IMR-90 (cell line): ENCODE measurements at regions of chr1 and their contacts with region 1.

Region 1: DNA sequence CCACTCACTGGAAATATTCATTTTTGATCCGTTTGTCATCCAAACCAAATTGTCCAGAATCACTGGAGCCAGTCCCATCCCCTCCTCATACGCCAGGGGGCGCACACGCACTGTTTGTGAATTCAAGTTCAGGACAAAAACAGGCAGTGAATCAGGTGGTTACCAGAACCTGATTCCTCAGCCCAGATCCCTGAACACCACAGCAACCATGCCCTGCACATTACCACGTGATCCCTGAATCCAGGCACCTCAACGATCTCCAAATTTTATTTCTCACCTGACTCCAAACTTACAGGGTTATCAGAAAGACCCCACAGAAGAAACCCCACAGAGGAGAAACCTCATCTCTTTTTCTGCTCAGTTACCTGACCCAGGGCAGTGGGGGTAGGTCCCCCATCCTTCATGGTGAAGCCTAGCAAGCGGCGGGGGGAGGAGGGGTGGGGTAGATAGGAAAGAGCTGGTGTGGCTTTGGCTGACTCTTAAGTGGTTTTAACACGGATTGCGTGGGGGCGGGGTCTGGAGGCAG is 1.4 kb upstream of the PTPRF start:
- DNase-seq: peak; percentile 90
- ATAC-seq: peak; percentile 64
- H3K4me3 ChIP-seq: no peak overlapping the region
- H3K27ac ChIP-seq: no peak overlapping the region
- H3K4me1 ChIP-seq: peaks cover 8% of the 10 kb centered on the region
- H3K27me3 ChIP-seq: no peaks in the 10 kb centered on the region
- CTCF ChIP-seq: peak; percentile 96
- POLR2A ChIP-seq: no peak
- RAD21 ChIP-seq: peak; percentile 93

Region 2: GRCh38 chr1:43441894-43442637 is 87.2 kb before region 1 on chr1:
- CTCF ChIA-PET with region 1: no interaction called
- POLR2A ChIA-PET with region 1: no interaction called
- dilution Hi-C with region 1: no loop called
- in situ Hi-C with region 1: no loop called
- intact Hi-C with region 1: no loop called
- DNase-seq: no peak
- ATAC-seq: no peak
- H3K4me3 ChIP-seq: no peak overlapping the region
- H3K27ac ChIP-seq: no peak overlapping the region
- H3K4me1 ChIP-seq: peaks cover 4% of the 10 kb centered on the region; the same call in 1 of the 2 replicates
- H3K27me3 ChIP-seq: no peaks in the 10 kb centered on the region
- CTCF ChIP-seq: no peak
- POLR2A ChIP-seq: no peak
- RAD21 ChIP-seq: no peak

Region 3: DNA sequence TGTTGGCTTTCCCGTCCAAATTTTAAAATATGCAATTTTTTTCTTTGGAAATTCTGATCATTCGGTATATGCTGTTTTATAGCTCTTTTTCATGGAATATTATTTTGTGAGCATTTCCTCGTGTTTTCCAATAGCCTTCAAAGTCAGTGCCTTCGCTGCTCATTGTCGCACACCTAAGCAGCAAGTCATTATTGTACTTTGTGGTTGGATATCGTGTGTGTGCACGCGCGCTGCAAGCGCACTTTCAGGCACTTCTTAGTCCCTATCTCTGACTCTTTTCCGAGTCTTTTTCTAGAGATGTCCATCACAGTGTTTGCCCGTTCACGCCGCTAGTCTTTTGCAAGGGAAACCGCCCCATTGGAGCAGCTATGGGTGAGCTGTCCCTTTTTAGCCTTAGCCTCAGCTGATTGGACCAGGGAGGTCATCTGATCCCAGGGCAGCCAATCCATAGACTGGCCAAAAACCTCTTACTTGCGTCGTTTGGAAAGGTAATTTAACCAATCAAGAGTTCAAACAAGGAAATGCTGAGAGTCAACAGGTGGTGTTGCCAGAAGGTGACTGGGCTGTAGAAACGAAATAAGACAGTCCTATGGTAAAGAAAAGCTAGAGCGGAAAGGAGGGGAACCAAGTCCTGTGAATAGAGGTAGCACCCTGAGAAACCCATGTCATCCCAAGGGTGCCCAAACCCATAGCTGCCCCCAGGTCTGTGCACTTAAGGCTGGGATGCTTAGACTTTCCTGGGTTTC is 74.8 kb before region 1 on chr1:
- CTCF ChIA-PET with region 1: no interaction called
- POLR2A ChIA-PET with region 1: no interaction called
- dilution Hi-C with region 1: no loop called
- in situ Hi-C with region 1: no loop called
- intact Hi-C with region 1: loop called (anchors 5 kb)
- DNase-seq: peak; percentile 81
- ATAC-seq: peak; percentile 59
- H3K4me3 ChIP-seq: peak overlapping the region; percentile 57
- H3K27ac ChIP-seq: peak overlapping the region; percentile 87
- H3K4me1 ChIP-seq: peaks cover 7% of the 10 kb centered on the region
- H3K27me3 ChIP-seq: no peaks in the 10 kb centered on the region
- CTCF ChIP-seq: no peak
- POLR2A ChIP-seq: no peak
- RAD21 ChIP-seq: no peak

Region 4: DNA sequence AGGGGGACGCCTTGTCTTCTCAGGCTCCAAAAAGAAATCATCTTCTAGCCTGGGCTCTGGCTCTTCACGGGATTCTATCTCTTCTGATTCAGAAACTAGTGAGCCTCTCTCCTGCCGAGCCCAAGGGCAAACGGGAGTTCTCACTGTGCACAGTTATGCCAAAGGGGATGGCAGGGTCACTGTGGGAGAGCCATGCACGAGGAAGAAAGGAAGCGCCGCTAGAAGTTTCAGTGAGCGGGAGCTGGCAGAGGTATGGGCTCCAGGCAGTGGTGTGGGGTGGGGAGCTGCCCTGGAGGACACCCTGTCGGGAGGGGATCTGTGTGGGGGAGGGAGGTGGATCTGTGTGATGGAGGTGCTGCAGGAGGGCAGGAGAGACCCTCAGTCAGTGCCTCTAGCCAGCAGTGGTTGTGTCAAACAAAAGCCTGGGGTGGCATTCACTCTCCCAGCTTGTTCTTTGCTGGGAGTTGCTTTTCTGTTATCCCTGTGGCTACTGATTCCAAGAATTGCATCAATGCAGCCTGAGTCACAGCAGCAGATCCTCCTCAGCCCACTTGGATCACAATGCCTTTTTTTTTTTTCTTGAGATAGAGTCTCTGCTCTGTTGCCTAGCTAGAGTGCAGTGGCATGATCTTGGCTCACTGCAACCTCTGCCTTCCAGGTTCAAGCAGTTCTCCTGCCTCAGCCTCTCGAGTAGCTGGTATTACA is 142.5 kb after region 1 on chr1:
- CTCF ChIA-PET with region 1: interaction called, 4 read pairs
- POLR2A ChIA-PET with region 1: no interaction called
- dilution Hi-C with region 1: no loop called
- in situ Hi-C with region 1: no loop called
- intact Hi-C with region 1: loop called (anchors 1 kb)
- DNase-seq: peak; percentile 82
- ATAC-seq: peak; percentile 86
- H3K4me3 ChIP-seq: no peak overlapping the region
- H3K27ac ChIP-seq: no peak overlapping the region
- H3K4me1 ChIP-seq: peaks cover 3% of the 10 kb centered on the region
- H3K27me3 ChIP-seq: no peaks in the 10 kb centered on the region
- CTCF ChIP-seq: no peak
- POLR2A ChIP-seq: no peak
- RAD21 ChIP-seq: no peak

Region 5: DNA sequence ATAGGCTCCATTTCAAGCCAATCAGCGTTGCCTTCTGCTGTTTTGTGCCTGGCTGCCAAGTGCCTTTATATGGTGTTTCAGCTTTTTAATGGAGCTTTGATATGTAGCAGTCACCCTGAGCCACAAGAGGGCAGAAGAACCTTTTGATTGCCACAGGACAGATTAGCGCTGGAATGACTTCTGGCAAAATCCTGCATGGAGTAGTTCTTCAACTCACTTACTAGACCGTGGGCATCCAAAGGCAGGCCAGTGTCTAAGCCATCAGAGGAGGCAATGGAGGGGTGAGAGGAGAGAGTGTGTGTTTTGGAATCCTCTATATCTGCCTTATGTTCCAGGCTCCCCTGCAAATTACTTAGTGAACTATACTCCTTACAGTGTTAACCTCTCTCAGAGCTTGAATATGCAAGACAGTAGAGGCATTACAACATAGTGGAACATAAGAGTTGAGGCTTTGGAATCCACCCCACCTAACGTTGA is 234.3 kb after region 1 on chr1:
- CTCF ChIA-PET with region 1: no interaction called
- POLR2A ChIA-PET with region 1: no interaction called
- dilution Hi-C with region 1: no loop called
- in situ Hi-C with region 1: no loop called
- intact Hi-C with region 1: loop called (anchors 1 kb)
- DNase-seq: peak; percentile 93
- ATAC-seq: peak; percentile 98
- H3K4me3 ChIP-seq: no peak overlapping the region
- H3K27ac ChIP-seq: no peak overlapping the region
- H3K4me1 ChIP-seq: peaks cover 7% of the 10 kb centered on the region
- H3K27me3 ChIP-seq: no peaks in the 10 kb centered on the region
- CTCF ChIP-seq: peak; percentile 97
- POLR2A ChIP-seq: 0 out of 2 replicates have a peak, but pooled peaks have one; percentile 46
- RAD21 ChIP-seq: peak; percentile 100

Region 6: DNA sequence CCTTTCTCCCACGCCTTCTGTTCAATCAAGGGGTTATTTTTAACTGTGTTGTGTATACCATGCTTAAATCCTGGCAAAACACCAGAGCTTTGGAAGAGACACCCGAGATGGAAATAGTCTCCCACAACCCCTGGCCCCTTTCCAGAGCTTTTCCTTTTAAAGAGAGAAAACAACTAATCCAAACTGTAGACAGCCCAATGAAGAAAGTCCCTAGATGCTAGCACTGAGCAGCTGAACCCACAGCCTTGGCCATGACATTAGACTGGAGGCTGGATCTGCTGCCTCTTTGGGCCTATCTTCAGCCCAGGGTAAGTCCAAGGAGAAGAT is 339.4 kb after region 1 on chr1:
- CTCF ChIA-PET with region 1: no interaction called
- POLR2A ChIA-PET with region 1: no interaction called
- dilution Hi-C with region 1: no loop called
- in situ Hi-C with region 1: no loop called
- intact Hi-C with region 1: no loop called
- DNase-seq: peak; percentile 83
- ATAC-seq: peak; percentile 65
- H3K4me3 ChIP-seq: no peak overlapping the region
- H3K27ac ChIP-seq: no peak overlapping the region
- H3K4me1 ChIP-seq: peaks cover 7% of the 10 kb centered on the region
- H3K27me3 ChIP-seq: no peaks in the 10 kb centered on the region
- CTCF ChIP-seq: no peak
- POLR2A ChIP-seq: no peak
- RAD21 ChIP-seq: no peak

Region 7: DNA sequence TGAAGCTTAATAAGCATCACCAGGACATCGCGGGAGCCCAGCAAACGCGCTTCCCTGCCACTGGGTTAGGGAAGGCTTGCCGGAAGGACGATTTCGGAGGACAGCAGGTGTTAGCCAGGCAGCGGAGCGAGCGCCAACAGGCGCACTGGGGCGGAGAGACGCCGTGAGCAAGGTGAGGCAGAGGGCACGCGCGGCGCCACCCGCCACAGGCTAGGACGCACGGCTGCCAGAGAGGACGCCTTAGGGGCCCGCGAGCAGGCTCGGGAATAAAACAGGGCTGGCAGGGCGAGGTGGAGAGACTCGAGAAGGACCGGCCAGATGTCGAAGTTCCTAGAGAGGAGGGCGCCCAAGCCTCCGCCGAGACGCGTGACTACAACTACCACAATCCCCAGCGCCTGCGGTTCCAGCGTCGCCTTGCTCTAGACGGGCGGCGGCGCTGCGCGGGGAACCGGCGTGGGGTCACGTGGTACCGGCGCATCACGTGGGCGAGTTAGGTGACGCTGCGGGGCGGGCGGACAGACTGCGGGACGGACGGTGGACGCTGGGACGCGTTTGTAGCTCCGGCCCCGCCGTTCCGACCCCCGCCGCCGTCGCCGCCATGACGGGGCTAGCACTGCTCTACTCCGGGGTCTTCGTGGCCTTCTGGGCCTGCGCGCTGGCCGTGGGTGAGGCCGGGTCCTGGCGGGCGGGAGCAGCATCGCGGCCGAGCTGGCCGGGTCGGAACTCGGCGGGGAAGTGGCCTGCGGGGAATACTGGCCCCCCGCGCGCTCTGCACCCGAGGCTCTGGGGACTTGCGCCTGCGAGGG is 445.4 kb after region 1 on chr1 and contains the start of gene ATP6V0B:
- CTCF ChIA-PET with region 1: no interaction called
- POLR2A ChIA-PET with region 1: no interaction called
- dilution Hi-C with region 1: no loop called
- in situ Hi-C with region 1: loop called (anchors 25 kb)
- intact Hi-C with region 1: no loop called
- DNase-seq: peak; percentile 89
- ATAC-seq: peak; percentile 73
- H3K4me3 ChIP-seq: peak within 1 kb of the TSS; percentile 76
- H3K27ac ChIP-seq: peak within 1 kb of the TSS; percentile 73
- H3K4me1 ChIP-seq: peaks cover 12% of the 10 kb centered on the region
- H3K27me3 ChIP-seq: no peaks in the 10 kb centered on the region
- CTCF ChIP-seq: peak; percentile 23; the same call in 1 of the 2 replicates
- POLR2A ChIP-seq: peak; percentile 77
- RAD21 ChIP-seq: no peak
- total RNA-seq, gene ATP6V0B: 72.1 and 80.3 TPM in 2 replicates